B cell (primary cell): ENCODE measurements at regions of chr11 and their contacts with region 1.

Region 1: DNA sequence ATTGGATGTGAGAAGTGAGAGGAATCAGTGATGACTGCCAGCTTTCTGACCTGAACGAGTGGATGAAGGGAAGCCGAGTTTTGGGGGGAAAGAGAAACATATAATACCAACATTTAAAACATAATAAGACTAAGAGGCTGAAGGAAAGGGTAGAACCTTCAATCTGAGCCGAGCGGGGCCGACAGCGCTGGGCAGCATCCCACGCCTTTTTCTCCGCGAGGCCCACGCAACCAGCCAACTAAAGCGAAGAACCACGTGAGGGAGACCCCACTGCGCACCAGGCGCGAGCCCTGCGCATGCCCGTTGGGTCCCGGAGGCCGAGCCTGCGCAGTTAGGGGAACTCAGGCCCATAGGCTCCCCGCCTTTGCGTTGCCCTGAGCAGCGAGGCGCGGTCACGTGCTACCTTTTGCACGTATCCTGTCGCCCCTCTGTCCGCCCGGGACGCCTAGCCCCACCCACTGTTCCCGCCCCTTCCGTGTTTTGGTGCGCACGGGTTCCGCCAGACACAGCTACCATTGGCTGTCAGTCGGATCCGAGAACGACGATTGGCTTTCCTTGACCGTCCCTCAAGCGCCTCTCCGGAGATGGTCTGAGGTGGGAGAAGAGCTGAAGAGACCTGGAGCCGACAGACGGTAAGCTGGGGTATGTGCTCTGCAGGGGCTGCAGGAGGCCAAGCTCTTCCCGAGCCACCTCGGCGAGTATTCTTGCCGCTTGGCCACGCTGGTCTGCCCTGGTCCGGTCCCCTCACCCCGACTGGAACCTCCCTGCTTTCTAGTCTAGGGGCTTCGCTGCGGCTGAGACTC is at the start of gene HINFP:
- DNase-seq: peak; percentile 99
- ATAC-seq: peak; percentile 98
- H3K4me3 ChIP-seq: peak within 1 kb of the TSS; percentile 91 to 97 (median 95)
- H3K4me3 Mint-ChIP-seq: peak within 1 kb of the TSS; percentile 87
- H3K27ac ChIP-seq: peak within 1 kb of the TSS; percentile 72 to 90
- H3K27ac Mint-ChIP-seq: peak within 1 kb of the TSS; percentile 90
- H3K4me1 ChIP-seq: peaks cover 15 to 17% of the 10 kb centered on the region in 2 donors
- H3K4me1 Mint-ChIP-seq: peaks cover 26% of the 10 kb centered on the region
- H3K27me3 ChIP-seq: no peaks in the 10 kb centered on the region
- H3K27me3 Mint-ChIP-seq: no peaks in the 10 kb centered on the region
- CTCF ChIP-seq: no peak
- total RNA-seq, gene HINFP: 78.7 and 84.6 TPM in 2 replicates

Region 2: DNA sequence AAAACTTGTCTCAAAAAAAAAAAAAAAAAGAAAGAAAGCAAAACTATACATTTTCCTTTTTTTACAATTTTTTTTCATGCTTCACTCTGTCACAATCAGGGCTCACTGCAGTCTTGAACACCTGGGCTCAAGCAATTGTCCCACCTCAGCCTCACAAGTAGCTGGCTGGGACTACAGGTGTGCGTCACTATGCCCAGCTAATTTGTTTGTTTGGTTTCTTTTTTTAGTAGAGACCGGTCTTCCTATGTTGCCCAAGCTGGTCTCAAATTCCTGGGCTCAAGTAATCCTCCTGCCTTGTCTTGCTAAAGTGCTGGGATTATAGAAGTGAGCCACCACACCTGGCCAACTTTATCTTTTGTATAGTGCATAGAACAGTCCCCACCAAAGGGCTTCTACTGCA is 252.6 kb before region 1 on chr11:
- CTCF ChIA-PET with region 1: no interaction called
- POLR2A ChIA-PET with region 1: no interaction called
- intact Hi-C with region 1: no loop called
- DNase-seq: peak; percentile 74
- ATAC-seq: no peak
- H3K4me3 ChIP-seq: no peak overlapping the region
- H3K4me3 Mint-ChIP-seq: peak overlapping the region; percentile 47
- H3K27ac ChIP-seq: peak overlapping the region; percentile 78 to 99
- H3K27ac Mint-ChIP-seq: peak overlapping the region; percentile 82
- H3K4me1 ChIP-seq: peaks cover 44 to 56% of the 10 kb centered on the region in 2 donors
- H3K4me1 Mint-ChIP-seq: peaks cover 45% of the 10 kb centered on the region
- H3K27me3 ChIP-seq: no peaks in the 10 kb centered on the region
- H3K27me3 Mint-ChIP-seq: no peaks in the 10 kb centered on the region
- CTCF ChIP-seq: no peak

Region 3: GRCh38 chr11:118918128-118918685 is 203.0 kb before region 1 on chr11:
- CTCF ChIA-PET with region 1: no interaction called
- POLR2A ChIA-PET with region 1: no interaction called
- intact Hi-C with region 1: no loop called
- DNase-seq: no peak
- ATAC-seq: no peak
- H3K4me3 ChIP-seq: no peak overlapping the region
- H3K4me3 Mint-ChIP-seq: no peak overlapping the region
- H3K27ac ChIP-seq: peak overlapping the region; percentile 27 to 94
- H3K27ac Mint-ChIP-seq: peak overlapping the region; percentile 94
- H3K4me1 ChIP-seq: peaks cover 91 to 98% of the 10 kb centered on the region in 2 donors
- H3K4me1 Mint-ChIP-seq: peaks cover 83% of the 10 kb centered on the region
- H3K27me3 ChIP-seq: no peaks in the 10 kb centered on the region
- H3K27me3 Mint-ChIP-seq: no peaks in the 10 kb centered on the region
- CTCF ChIP-seq: no peak

Region 4: GRCh38 chr11:118956094-118956846 is 164.9 kb before region 1 on chr11 and contains the start of gene UPK2:
- CTCF ChIA-PET with region 1: no interaction called
- POLR2A ChIA-PET with region 1: interaction called, 12 read pairs
- intact Hi-C with region 1: no loop called
- DNase-seq: peak; percentile 89
- ATAC-seq: peak; percentile 99
- H3K4me3 ChIP-seq: no peak within 1 kb of the TSS
- H3K4me3 Mint-ChIP-seq: no peak within 1 kb of the TSS
- H3K27ac ChIP-seq: no peak within 1 kb of the TSS
- H3K27ac Mint-ChIP-seq: peak within 1 kb of the TSS; percentile 53
- H3K4me1 ChIP-seq: peaks cover 0 to 6% of the 10 kb centered on the region in 2 donors
- H3K4me1 Mint-ChIP-seq: peaks cover 5% of the 10 kb centered on the region
- H3K27me3 ChIP-seq: peaks cover 0 to 13% (median 0%) of the 10 kb centered on the region in 4 experiments
- H3K27me3 Mint-ChIP-seq: peaks cover 22% of the 10 kb centered on the region
- CTCF ChIP-seq: peak; percentile 94
- total RNA-seq, gene UPK2: not detected in 2 replicates

Region 5: GRCh38 chr11:119030329-119031049 is 90.7 kb before region 1 on chr11 and contains the start of gene SLC37A4:
- CTCF ChIA-PET with region 1: no interaction called
- POLR2A ChIA-PET with region 1: no interaction called
- intact Hi-C with region 1: loop called (anchors 1 kb)
- DNase-seq: peak; percentile 99
- ATAC-seq: peak; percentile 96
- H3K4me3 ChIP-seq: peak within 1 kb of the TSS in 4 of 5 experiments; percentile 80 to 89 (median 86)
- H3K4me3 Mint-ChIP-seq: peak within 1 kb of the TSS; percentile 92
- H3K27ac ChIP-seq: peak within 1 kb of the TSS; percentile 46 to 74
- H3K27ac Mint-ChIP-seq: peak within 1 kb of the TSS; percentile 82
- H3K4me1 ChIP-seq: peaks cover 4 to 10% of the 10 kb centered on the region in 2 donors
- H3K4me1 Mint-ChIP-seq: peaks cover 20% of the 10 kb centered on the region
- H3K27me3 ChIP-seq: no peaks in the 10 kb centered on the region
- H3K27me3 Mint-ChIP-seq: no peaks in the 10 kb centered on the region
- CTCF ChIP-seq: no peak
- total RNA-seq, gene SLC37A4: 13.2 and 14.3 TPM in 2 replicates

Region 6: DNA sequence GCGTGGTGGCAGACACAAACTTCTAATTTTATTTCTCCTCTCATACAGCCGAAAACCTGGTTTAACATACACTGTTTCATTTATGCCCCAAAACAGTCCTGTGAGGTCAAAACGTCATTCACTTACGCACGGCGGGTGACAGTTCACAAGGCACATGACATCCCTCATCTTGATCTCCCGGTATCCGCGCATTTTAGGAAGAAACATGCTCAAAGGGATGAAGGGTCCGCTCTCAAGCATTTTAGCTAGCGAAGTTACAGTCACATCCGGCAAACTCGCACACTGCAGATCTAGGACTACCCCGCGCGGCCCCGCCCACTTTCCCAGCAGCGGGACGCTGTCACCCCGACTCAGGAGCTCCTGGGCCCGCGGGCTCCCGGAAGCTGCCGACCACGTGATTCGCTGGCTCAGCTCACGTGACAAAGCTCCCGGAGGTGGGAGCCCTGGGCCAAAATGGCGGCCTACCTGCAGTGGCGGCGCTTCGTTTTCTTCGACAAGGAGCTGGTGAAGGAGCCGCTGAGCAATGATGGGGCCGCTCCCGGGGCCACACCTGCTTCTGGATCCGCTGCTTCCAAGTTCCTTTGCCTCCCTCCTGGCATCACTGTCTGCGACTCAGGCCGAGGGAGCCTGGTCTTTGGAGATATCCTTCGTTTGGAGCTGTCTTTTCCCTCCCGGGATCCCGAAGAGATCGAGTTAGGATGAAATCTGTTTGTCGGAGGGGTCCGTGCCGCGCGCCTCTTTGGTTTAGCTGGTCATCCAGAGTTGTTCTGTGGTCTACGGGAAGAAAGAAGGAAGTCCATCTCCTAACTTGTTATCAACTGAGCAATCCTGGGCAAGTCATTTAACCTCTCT is 53.6 kb before region 1 on chr11 and contains the start of gene VPS11:
- CTCF ChIA-PET with region 1: interaction called, 3 read pairs
- POLR2A ChIA-PET with region 1: no interaction called
- intact Hi-C with region 1: loop called (anchors 1 kb)
- DNase-seq: peak; percentile 97
- ATAC-seq: peak; percentile 96
- H3K4me3 ChIP-seq: peak within 1 kb of the TSS; percentile 72 to 98 (median 96)
- H3K4me3 Mint-ChIP-seq: peak within 1 kb of the TSS; percentile 100
- H3K27ac ChIP-seq: peak within 1 kb of the TSS; percentile 88 to 92
- H3K27ac Mint-ChIP-seq: peak within 1 kb of the TSS; percentile 98
- H3K4me1 ChIP-seq: peaks cover 15 to 28% of the 10 kb centered on the region in 2 donors
- H3K4me1 Mint-ChIP-seq: peaks cover 38% of the 10 kb centered on the region
- H3K27me3 ChIP-seq: no peaks in the 10 kb centered on the region
- H3K27me3 Mint-ChIP-seq: no peaks in the 10 kb centered on the region
- CTCF ChIP-seq: no peak
- total RNA-seq, gene VPS11: 64.7 and 71.1 TPM in 2 replicates

Region 7: DNA sequence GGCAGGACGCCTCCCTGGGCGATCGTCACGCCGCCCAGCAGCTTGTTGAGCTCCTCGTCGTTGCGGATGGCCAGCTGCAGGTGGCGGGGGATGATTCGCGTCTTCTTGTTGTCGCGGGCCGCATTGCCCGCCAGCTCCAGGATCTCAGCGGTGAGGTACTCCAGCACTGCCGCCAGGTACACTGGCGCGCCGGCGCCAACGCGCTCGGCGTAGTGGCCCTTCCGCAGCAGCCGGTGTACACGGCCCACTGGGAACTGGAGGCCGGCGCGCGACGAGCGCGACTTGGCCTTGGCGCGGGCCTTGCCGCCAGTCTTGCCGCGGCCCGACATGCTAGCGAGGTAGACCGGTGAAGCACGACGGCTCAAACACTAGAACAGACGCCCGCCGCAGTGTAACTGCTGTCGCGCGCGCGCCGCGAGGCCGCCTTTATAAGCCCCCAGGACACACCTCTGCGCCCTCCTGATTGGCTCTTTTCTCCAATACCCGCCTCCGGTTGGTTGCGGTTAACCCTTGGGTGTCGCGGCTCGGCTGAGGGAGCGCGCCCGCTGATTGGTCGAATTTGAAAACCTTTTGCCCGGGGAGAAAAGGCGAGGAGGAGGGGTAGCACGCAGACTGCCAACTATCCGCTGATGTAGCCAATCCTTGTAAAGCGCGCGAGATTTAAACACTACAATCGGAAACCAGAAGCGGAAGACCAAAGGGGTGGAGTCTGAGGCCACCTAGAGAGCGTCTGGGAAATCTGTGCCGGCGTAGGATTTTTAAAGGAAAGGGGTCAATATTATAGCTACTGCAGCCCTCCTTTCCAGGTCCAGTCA is 25.9 kb before region 1 on chr11:
- CTCF ChIA-PET with region 1: interaction called, 6 read pairs
- POLR2A ChIA-PET with region 1: interaction called, 7 read pairs
- intact Hi-C with region 1: loop called (anchors 1 kb)
- DNase-seq: peak; percentile 100
- ATAC-seq: peak; percentile 85
- H3K4me3 ChIP-seq: peak overlapping the region; percentile 42 to 91 (median 85)
- H3K4me3 Mint-ChIP-seq: peak overlapping the region; percentile 96
- H3K27ac ChIP-seq: peak overlapping the region; percentile 69 to 76
- H3K27ac Mint-ChIP-seq: peak overlapping the region; percentile 84
- H3K4me1 ChIP-seq: peaks cover 26 to 43% of the 10 kb centered on the region in 2 donors
- H3K4me1 Mint-ChIP-seq: peaks cover 47% of the 10 kb centered on the region
- H3K27me3 ChIP-seq: no peaks in the 10 kb centered on the region
- H3K27me3 Mint-ChIP-seq: no peaks in the 10 kb centered on the region
- CTCF ChIP-seq: peak; percentile 9

Region 8: GRCh38 chr11:119284344-119285157 is 163.3 kb after region 1 on chr11:
- CTCF ChIA-PET with region 1: no interaction called
- POLR2A ChIA-PET with region 1: no interaction called
- intact Hi-C with region 1: no loop called
- DNase-seq: peak; percentile 70
- ATAC-seq: peak; percentile 74
- H3K4me3 ChIP-seq: no peak overlapping the region
- H3K4me3 Mint-ChIP-seq: no peak overlapping the region
- H3K27ac ChIP-seq: no peak overlapping the region
- H3K27ac Mint-ChIP-seq: peak overlapping the region; percentile 8
- H3K4me1 ChIP-seq: peaks cover 3 to 5% of the 10 kb centered on the region in 2 donors
- H3K4me1 Mint-ChIP-seq: peaks cover 6% of the 10 kb centered on the region
- H3K27me3 ChIP-seq: no peaks in the 10 kb centered on the region
- H3K27me3 Mint-ChIP-seq: no peaks in the 10 kb centered on the region
- CTCF ChIP-seq: peak; percentile 70

Region 9: DNA sequence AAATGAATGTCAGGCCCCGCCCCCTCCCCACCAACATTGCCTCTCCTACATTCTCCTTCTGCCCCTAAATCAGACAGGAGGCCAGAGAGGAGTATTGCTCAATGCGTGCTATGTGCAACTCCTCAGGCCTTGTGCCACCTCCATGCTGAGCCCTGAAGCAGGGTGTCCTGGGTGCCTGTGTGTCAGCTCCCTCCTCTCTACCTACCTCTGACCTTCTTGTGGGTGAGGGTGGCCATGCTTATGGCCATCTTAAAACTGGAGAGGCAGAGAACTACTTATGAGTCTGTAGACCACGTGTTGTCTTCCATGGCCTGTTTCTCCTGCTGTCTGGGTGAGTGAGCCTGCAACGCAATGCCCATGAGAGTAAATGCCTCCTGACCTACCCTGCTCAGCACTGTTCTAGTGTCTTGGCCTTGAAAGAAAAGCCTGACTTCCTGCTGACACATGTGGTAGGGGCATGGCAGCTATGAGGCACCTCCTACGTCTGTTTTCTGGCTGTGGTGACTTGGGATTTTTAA is 185.2 kb after region 1 on chr11:
- CTCF ChIA-PET with region 1: no interaction called
- POLR2A ChIA-PET with region 1: no interaction called
- intact Hi-C with region 1: no loop called
- DNase-seq: no peak
- ATAC-seq: no peak
- H3K4me3 ChIP-seq: no peak overlapping the region
- H3K4me3 Mint-ChIP-seq: no peak overlapping the region
- H3K27ac ChIP-seq: no peak overlapping the region
- H3K27ac Mint-ChIP-seq: peak overlapping the region; percentile 20
- H3K4me1 ChIP-seq: no peaks in the 10 kb centered on the region
- H3K4me1 Mint-ChIP-seq: no peaks in the 10 kb centered on the region
- H3K27me3 ChIP-seq: no peaks in the 10 kb centered on the region
- H3K27me3 Mint-ChIP-seq: no peaks in the 10 kb centered on the region
- CTCF ChIP-seq: no peak